Right cardiac atrium (tissue), 5 donors: ENCODE measurements at regions of chr3 and their contacts with region 1.

Region 1: GRCh38 chr3:141561426-141562034 is 74.7 kb downstream of the RASA2 start:
- DNase-seq: no peak
- ATAC-seq: no peak
- H3K4me3 ChIP-seq: no peak overlapping the region
- H3K27ac ChIP-seq: no peak overlapping the region
- H3K4me1 ChIP-seq: no peaks in the 10 kb centered on the region
- H3K27me3 ChIP-seq: no peaks in the 10 kb centered on the region

Region 2: DNA sequence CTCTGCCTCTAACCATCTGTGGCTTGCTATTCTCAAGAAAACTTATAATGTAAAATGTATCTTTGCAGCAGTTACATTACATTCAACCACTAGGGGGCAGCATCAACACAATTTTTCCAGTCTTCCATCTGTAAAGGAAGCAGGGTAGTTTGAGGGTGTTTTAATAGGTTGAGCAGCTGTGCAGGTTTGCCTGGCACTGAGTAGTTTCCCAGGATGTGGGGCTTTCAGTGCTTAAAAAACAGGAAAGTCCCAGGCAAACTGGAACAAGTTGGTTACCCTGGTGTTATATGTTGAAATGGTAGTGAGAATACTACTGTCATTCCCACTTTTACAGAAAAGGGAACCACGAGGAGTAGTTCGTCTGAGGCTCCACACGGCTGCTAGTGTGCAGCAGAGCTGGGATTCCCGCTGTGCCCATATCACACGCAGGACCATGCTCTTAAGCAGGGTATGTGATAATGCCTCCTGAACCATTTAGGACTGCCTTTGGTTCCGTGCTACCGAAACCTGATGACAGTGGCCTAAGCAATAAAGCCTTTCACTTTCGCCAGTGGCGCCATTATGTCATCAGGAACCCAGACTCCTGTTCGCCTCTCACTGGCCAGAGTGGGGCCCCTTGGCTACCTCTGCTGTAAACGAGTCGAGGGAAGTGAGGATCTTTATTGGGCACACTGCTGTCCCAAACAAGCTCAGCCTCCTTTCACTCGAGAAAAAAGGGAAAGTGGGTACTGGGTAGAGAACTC is 257.9 kb before region 1 on chr3:
- intact Hi-C with region 1: loop called in 2 of 4 experiments (anchors 10 kb)
- DNase-seq: no peak
- ATAC-seq: peak; percentile 45 to 73
- H3K4me3 ChIP-seq: no peak overlapping the region
- H3K27ac ChIP-seq: no peak overlapping the region
- H3K4me1 ChIP-seq: no peaks in the 10 kb centered on the region
- H3K27me3 ChIP-seq: no peaks in the 10 kb centered on the region

Region 3: GRCh38 chr3:141360888-141361598 is 200.5 kb before region 1 on chr3:
- intact Hi-C with region 1: loop called in 1 of 4 experiments (anchors 10 kb)
- DNase-seq: no peak
- ATAC-seq: peak; percentile 78 to 92
- H3K4me3 ChIP-seq: peak overlapping the region; percentile 35
- H3K27ac ChIP-seq: no peak overlapping the region
- H3K4me1 ChIP-seq: no peaks in the 10 kb centered on the region
- H3K27me3 ChIP-seq: no peaks in the 10 kb centered on the region

Region 4: DNA sequence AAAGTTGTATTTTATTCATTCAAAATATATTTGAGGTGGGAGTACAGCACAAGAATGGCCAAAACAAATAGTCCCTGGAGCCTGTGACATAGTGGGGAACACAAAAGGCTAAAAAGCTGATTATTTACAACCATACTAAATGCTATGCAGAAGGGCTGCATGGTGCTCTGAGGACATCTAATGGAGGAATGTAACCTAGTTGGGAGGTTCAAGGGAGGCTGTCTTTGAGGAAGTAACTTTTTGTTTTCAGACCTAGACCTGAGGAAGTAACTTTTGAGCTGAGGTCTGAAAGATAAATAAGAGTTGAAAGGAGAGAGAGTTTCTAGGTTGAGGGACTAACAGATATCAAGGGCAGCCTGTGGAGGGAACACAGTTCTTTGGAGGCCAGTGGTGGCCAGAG is 109.5 kb before region 1 on chr3:
- intact Hi-C with region 1: loop called in 1 of 4 experiments (anchors 5 kb)
- DNase-seq: no peak
- ATAC-seq: peak; percentile 79 to 81
- H3K4me3 ChIP-seq: no peak overlapping the region
- H3K27ac ChIP-seq: no peak overlapping the region
- H3K4me1 ChIP-seq: peaks cover 3% of the 10 kb centered on the region
- H3K27me3 ChIP-seq: no peaks in the 10 kb centered on the region

Region 5: DNA sequence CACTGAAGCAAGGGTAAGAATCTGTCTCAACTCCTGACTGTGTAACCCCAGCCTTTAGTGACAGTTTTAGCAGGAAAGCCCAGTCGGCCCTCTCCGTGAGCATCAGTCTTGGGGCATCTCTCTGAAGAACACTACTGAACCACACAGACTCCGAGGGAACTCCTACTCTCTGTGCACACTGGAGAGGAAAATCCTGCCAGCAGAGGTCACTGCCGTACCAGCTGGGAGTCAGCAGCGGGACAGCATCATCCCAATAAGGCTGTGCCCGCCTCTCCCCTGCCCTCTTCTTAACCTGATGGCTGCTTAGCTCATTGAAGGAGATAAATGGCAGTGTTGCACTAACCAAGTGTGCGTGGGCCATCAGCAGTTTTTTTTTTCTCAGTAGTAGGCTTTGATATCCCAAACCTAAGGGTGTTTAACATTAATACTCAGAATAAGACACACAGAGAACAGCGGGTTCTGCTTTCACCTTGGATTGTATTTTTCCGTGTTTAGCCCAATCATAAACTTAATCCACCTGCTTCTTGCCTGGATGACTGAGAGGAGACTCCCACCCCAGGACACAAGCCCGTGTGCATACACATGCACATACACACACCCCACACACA is 101.3 kb before region 1 on chr3:
- intact Hi-C with region 1: loop called (anchors 1 to 5 kb)
- DNase-seq: peak; percentile 88 to 95 (median 92)
- ATAC-seq: peak; percentile 96
- H3K4me3 ChIP-seq: no peak overlapping the region
- H3K27ac ChIP-seq: no peak overlapping the region
- H3K4me1 ChIP-seq: no peaks in the 10 kb centered on the region
- H3K27me3 ChIP-seq: no peaks in the 10 kb centered on the region

Region 6: GRCh38 chr3:141471160-141471559 is 90.4 kb before region 1 on chr3:
- intact Hi-C with region 1: loop called in 2 of 4 experiments (anchors 5 kb)
- DNase-seq: no peak
- ATAC-seq: no peak
- H3K4me3 ChIP-seq: no peak overlapping the region
- H3K27ac ChIP-seq: no peak overlapping the region
- H3K4me1 ChIP-seq: no peaks in the 10 kb centered on the region
- H3K27me3 ChIP-seq: no peaks in the 10 kb centered on the region

Region 7: DNA sequence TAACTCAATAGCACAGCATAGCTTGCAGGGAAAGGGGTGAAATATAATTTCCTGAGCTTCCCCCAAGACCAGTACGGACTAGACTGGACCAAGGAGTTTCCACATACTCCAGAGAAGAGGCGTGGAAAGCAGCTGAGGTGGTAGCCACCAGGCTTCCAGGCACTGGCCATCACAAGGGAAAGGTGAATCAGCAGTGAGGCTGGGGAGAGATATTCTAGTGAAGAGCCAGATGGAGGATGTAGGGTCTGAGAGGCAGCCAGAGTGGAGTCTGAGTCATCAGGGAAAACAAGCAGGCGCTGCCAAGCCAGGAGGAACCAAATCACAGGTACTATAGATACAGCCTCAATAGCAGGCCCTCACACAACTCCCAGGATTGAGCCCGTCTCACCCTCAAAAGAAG is 84.3 kb before region 1 on chr3:
- intact Hi-C with region 1: loop called in 2 of 4 experiments (anchors 5 kb)
- DNase-seq: no peak
- ATAC-seq: no peak
- H3K4me3 ChIP-seq: no peak overlapping the region
- H3K27ac ChIP-seq: no peak overlapping the region
- H3K4me1 ChIP-seq: no peaks in the 10 kb centered on the region
- H3K27me3 ChIP-seq: no peaks in the 10 kb centered on the region

Region 8: DNA sequence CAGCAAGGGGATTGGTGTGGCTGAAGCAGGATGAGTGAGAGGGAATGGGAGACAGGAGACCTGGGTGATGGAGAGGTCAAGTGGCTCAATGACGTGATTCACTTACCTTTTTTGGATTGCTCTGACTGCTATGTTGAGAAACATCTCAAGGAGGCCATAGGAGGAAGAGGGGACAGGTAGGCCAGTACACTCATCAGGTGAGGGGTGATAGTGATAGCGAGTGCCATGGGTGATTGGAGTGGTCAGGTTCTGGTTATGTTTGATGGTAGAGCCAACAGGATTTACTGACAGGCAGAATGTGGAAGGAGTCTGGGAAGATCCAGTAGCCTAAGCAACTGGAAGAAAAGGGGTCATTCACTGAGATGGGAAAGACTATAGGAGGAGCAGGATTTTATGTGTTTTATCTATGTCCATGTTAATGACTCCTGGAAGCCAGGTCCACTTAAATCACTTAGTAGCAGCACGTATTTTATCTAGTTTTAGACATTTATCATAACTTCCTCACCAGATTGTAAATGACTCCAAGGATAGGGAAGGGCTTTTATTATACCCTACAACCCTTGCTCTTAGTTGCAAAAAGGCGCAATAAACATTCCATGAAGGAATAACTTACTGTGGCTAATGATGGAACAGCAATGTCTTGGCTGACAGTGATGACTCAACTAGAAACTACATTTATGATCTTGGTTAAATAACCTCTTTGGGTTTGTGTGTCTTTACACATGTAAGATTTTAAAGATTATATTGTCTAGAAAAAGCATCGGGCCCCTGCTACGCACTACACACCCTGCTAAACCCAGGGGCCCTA is 56.8 kb after region 1 on chr3:
- intact Hi-C with region 1: no loop called
- DNase-seq: no peak
- ATAC-seq: no peak
- H3K4me3 ChIP-seq: no peak overlapping the region
- H3K27ac ChIP-seq: no peak overlapping the region
- H3K4me1 ChIP-seq: no peaks in the 10 kb centered on the region
- H3K27me3 ChIP-seq: no peaks in the 10 kb centered on the region